CD14-positive monocyte (primary cell): ENCODE measurements at regions of chr1 and their contacts with region 1.

Region 1: DNA sequence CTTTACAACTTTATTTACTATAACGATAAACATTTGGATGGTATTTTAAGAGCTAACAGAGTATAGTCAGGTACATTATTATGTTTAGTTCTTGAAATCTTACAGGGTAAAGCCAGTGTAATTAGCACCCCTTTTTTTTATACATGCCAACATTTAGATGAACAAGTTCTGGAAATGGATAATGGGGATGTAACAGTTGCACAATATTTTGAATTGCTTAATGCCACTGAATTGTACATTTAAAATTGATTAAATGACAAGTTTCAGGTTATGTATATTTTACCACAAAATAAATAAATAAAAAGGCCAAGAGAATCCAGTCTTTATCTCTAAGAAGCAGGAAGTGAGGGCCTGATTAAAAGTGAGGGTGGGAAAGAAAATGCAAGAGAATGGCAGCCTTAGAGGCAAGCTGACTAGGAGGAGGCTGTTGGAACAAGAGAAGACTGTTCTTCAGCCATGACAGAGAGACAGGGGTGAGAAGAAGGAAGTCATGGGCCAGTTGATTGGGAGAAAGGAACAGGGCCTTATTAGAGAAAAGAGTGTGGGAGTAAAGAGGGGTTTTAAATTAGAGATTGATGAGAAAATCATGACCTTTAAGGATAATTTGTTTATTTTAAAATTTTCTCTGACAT is 49.9 kb upstream of the TNFSF18 start:
- DNase-seq: no peak
- H3K4me3 ChIP-seq: no peak overlapping the region
- H3K4me3 Mint-ChIP-seq: no peak overlapping the region
- H3K27ac ChIP-seq: peak overlapping the region in 1 of 2 donors; percentile 12
- H3K27ac Mint-ChIP-seq: peak overlapping the region in 6 of 7 donors; percentile 26 to 89 (median 70)
- H3K4me1 ChIP-seq: peaks cover 0 to 7% of the 10 kb centered on the region in 2 donors
- H3K4me1 Mint-ChIP-seq: peaks cover 6% of the 10 kb centered on the region
- H3K27me3 ChIP-seq: no peaks in the 10 kb centered on the region
- H3K27me3 Mint-ChIP-seq: peaks cover 0 to 3% (median 2%) of the 10 kb centered on the region in 3 donors
- CTCF ChIP-seq: no peak

Region 2: GRCh38 chr1:173020138-173020750 is 80.3 kb before region 1 on chr1:
- intact Hi-C with region 1: loop called in 1 of 2 experiments (anchors 10 kb)
- DNase-seq: peak in 2 of 3 donors; percentile 43 to 59
- H3K4me3 ChIP-seq: peak overlapping the region in 2 of 3 experiments; percentile 35 to 59
- H3K4me3 Mint-ChIP-seq: peak overlapping the region; percentile 57 to 85
- H3K27ac ChIP-seq: peak overlapping the region; percentile 63 to 73
- H3K27ac Mint-ChIP-seq: peak overlapping the region; percentile 79 to 93 (median 88)
- H3K4me1 ChIP-seq: peaks cover 49 to 56% of the 10 kb centered on the region in 2 donors
- H3K4me1 Mint-ChIP-seq: peaks cover 46% of the 10 kb centered on the region
- H3K27me3 ChIP-seq: no peaks in the 10 kb centered on the region
- H3K27me3 Mint-ChIP-seq: no peaks in the 10 kb centered on the region
- CTCF ChIP-seq: no peak